Psoas muscle (tissue), 8 donors: ENCODE measurements at regions of chr17 and their contacts with region 1.

Region 1: GRCh38 chr17:4565209-4566141 is 5.1 kb upstream of the GGT6 start:
- DNase-seq: peak; percentile 60 to 78
- ATAC-seq: peak; percentile 86 to 94 (median 89)
- H3K4me3 ChIP-seq: no peak overlapping the region
- H3K27ac ChIP-seq: no peak overlapping the region
- H3K4me1 ChIP-seq: peaks cover 9% of the 10 kb centered on the region
- H3K27me3 ChIP-seq: no peaks in the 10 kb centered on the region
- CTCF ChIP-seq: peak; percentile 77

Region 2: GRCh38 chr17:4625181-4625617 is 59.7 kb after region 1 on chr17:
- intact Hi-C with region 1: loop called (anchors 1 to 2 kb)
- DNase-seq: no peak
- ATAC-seq: peak; percentile 69 to 85 (median 84)
- H3K4me3 ChIP-seq: no peak overlapping the region
- H3K27ac ChIP-seq: peak overlapping the region; percentile 82
- H3K4me1 ChIP-seq: peaks cover 13% of the 10 kb centered on the region
- H3K27me3 ChIP-seq: no peaks in the 10 kb centered on the region
- CTCF ChIP-seq: no peak